ENCODE measurements at regions of chr10 and their contacts with region 1.

Region 1: GRCh38 chr10:103244663-103245271 is 920 bp upstream of the RPEL1 start:
- DNase-seq: no peak
- H3K4me3 ChIP-seq: no peak overlapping the region
- CTCF ChIP-seq: peak; percentile 87

Region 2: GRCh38 chr10:102835007-102835482 is 409.7 kb before region 1 on chr10:
- CTCF ChIA-PET with region 1: interaction called, 10 read pairs
- POLR2A ChIA-PET with region 1: no interaction called
- DNase-seq: no peak
- H3K4me3 ChIP-seq: no peak overlapping the region
- CTCF ChIP-seq: peak; percentile 85

Region 3: DNA sequence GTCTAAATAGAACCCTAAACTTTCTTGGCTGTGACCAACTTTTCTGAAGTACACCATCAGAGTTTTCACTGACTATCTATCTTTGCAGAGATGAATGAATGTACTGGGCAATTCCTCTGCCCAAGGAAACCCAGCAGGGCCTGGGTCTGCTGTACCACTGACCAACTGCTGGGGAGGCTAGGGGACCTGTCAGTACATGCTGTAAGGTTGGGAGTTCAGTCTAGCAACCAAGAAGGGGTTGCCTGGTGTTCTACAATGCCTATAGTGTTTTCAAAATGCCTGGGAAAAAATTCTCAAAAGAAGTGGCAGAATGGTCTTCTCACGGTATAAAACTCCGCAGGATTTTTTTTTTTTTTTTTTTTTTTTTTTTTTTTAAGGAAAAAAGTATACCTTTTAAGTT is 158.0 kb before region 1 on chr10:
- CTCF ChIA-PET with region 1: interaction called, 30 read pairs
- POLR2A ChIA-PET with region 1: no interaction called
- DNase-seq: no peak
- H3K4me3 ChIP-seq: no peak overlapping the region
- CTCF ChIP-seq: no peak

Region 4: GRCh38 chr10:103111031-103111917 is 133.5 kb before region 1 on chr10:
- CTCF ChIA-PET with region 1: interaction called, 62 read pairs
- POLR2A ChIA-PET with region 1: no interaction called
- DNase-seq: no peak
- H3K4me3 ChIP-seq: no peak overlapping the region
- CTCF ChIP-seq: no peak

Region 5: DNA sequence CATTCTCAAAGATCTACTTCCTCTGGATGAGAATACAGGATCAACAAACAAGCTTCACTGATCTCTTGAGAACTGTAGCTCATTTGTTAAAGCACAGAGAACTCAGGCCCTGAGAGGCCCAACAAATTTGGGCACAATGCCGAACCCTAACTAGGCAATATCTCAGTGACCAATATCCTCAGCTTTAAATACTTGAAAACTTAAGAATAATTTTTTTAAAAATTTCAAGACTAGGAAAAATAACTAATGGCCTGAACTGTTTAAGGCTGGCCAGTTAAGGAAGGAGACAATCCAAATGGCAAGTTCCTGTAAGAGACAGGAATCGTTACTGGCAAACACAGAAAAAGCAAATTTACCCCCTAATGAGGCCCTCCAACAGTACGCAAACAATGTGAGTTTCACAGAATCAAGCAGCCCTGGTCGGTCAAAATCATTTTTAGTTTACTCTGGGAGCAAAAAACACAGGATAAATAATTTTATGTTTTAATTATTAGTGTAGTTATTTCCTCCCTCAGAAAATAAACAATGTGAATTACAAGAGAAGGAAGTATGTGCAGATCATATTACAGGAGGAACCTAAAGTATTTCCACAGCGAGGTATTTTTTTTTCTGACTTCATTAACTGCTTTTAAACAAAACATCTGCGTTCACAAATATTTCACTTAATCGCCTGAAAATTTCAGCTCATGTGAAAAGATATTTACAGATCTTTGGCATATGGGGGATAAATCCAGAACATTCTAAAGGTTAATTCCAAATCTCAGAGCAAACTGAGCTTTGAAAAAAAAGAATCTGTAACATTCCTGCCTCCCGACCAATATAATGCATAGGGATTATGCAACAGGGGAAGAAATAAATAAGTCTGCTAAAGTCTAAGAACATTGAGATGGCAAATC is 91.2 kb before region 1 on chr10:
- CTCF ChIA-PET with region 1: interaction called, 19 read pairs
- POLR2A ChIA-PET with region 1: no interaction called
- DNase-seq: no peak
- H3K4me3 ChIP-seq: no peak overlapping the region
- CTCF ChIP-seq: no peak

Region 6: GRCh38 chr10:103333925-103334520 is 89.3 kb after region 1 on chr10:
- CTCF ChIA-PET with region 1: interaction called, 23 read pairs
- POLR2A ChIA-PET with region 1: no interaction called
- DNase-seq: no peak
- H3K4me3 ChIP-seq: no peak overlapping the region
- CTCF ChIP-seq: peak; percentile 20

Measured in AG04449 (cell line).